Activated B cell treated with CpG ODN at 0.5 μM for 24 hours (primary cell): ENCODE measurements at regions of chr4 and their contacts with region 1.

Region 1: DNA sequence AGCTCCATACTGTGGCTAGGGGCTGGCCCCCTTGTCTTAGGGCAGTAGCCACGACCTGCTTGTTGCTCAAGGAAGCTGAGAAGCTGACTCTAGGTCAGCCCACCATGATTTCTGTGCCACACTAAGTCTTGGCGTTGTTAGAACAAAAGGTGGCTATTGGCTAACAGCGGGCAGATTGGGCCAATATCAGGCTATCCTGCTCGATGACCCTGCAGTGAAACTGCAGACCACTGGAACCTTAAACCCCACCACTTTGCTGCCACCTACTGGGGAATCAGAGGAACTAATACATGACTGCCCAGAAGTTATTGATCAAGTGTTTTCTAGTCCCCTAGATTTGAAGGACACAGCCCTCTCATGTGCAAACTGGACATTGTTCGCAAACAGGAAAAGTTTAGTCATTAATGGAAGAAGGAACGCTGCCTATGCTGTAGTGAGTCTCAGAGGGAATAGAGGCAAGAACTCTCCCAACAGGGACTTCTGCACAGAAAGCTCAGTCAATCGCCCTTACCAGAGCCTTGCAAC is 17.0 kb upstream of the PAPSS1 start:
- DNase-seq: peak; percentile 18
- ATAC-seq: peak; percentile 64
- H3K4me3 Mint-ChIP-seq: no peak overlapping the region
- H3K27ac Mint-ChIP-seq: no peak overlapping the region
- H3K4me1 Mint-ChIP-seq: no peaks in the 10 kb centered on the region
- H3K27me3 Mint-ChIP-seq: no peaks in the 10 kb centered on the region
- CTCF ChIP-seq: peak; percentile 57

Region 2: DNA sequence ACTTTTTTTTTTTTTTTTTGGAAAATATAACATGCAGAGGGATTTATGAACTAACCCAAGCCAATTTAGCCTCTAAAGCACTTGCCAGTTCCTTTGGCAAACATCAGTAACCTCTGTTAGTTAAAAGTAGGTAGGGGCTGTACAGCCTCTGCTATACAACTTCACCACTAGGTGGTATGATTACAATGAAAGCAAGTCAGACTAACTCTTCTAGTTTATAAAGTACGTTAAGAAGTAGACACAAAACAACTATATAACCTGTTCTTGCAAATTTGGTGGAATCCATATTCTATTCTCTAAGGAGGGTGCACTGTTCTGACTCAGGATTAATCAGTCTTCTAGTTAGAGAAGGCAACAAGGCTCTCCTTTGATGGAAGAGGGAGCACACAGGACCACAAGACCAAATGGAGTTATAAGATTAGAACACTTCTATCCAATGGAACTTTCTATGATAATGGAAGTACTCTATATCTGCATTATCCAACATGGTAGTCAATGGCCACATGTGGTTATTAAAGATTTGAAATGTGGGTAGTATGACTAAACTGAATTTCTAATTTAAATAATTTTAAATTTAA is 1407.9 kb before region 1 on chr4:
- CTCF ChIA-PET with region 1: no interaction called
- POLR2A ChIA-PET with region 1: no interaction called
- intact Hi-C with region 1: loop called (anchors 1 kb)
- DNase-seq: no peak
- ATAC-seq: peak; percentile 64
- H3K4me3 Mint-ChIP-seq: no peak overlapping the region
- H3K27ac Mint-ChIP-seq: no peak overlapping the region
- H3K4me1 Mint-ChIP-seq: no peaks in the 10 kb centered on the region
- H3K27me3 Mint-ChIP-seq: no peaks in the 10 kb centered on the region
- CTCF ChIP-seq: peak; percentile 51

Region 3: DNA sequence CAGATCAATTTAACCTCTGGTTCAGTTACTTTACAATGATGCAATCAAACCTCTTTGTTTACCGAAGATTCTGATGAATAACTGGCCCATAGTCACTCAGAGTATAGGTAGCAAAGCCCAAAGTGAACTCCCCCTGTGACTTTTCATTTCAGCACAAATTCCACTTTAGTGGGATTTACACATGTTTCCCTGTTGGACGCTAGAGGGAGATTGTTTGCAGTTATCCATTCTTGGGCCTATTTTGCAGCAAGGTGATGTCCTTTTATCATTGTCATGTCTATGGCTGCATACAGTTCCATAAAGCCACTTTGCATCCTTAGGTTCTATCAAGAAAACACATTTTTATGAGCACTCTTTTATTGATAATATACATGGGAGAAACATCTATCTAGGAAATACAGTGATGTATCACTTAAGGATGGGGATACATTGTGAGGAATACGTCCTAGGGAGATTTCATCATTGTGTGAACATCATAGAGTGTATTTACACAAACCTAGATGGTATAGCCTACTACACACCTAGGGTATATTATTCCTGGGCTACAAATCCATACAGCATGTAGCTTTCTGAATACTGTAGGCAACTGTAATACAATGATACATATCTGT is 686.4 kb before region 1 on chr4:
- CTCF ChIA-PET with region 1: interaction called, 3 read pairs
- POLR2A ChIA-PET with region 1: no interaction called
- intact Hi-C with region 1: loop called (anchors 2 kb)
- DNase-seq: no peak
- ATAC-seq: no peak
- H3K4me3 Mint-ChIP-seq: no peak overlapping the region
- H3K27ac Mint-ChIP-seq: no peak overlapping the region
- H3K4me1 Mint-ChIP-seq: no peaks in the 10 kb centered on the region
- H3K27me3 Mint-ChIP-seq: no peaks in the 10 kb centered on the region
- CTCF ChIP-seq: no peak

Region 4: GRCh38 chr4:107283587-107284559 is 453.1 kb before region 1 on chr4:
- CTCF ChIA-PET with region 1: no interaction called
- POLR2A ChIA-PET with region 1: no interaction called
- intact Hi-C with region 1: loop called (anchors 10 kb)
- DNase-seq: no peak
- ATAC-seq: no peak
- H3K4me3 Mint-ChIP-seq: no peak overlapping the region
- H3K27ac Mint-ChIP-seq: no peak overlapping the region
- H3K4me1 Mint-ChIP-seq: no peaks in the 10 kb centered on the region
- H3K27me3 Mint-ChIP-seq: no peaks in the 10 kb centered on the region
- CTCF ChIP-seq: no peak

Region 5: GRCh38 chr4:107392951-107393350 is 344.0 kb before region 1 on chr4:
- CTCF ChIA-PET with region 1: no interaction called
- POLR2A ChIA-PET with region 1: no interaction called
- intact Hi-C with region 1: no loop called
- DNase-seq: no peak
- ATAC-seq: no peak
- H3K4me3 Mint-ChIP-seq: no peak overlapping the region
- H3K27ac Mint-ChIP-seq: no peak overlapping the region
- H3K4me1 Mint-ChIP-seq: no peaks in the 10 kb centered on the region
- H3K27me3 Mint-ChIP-seq: no peaks in the 10 kb centered on the region
- CTCF ChIP-seq: no peak

Region 6: DNA sequence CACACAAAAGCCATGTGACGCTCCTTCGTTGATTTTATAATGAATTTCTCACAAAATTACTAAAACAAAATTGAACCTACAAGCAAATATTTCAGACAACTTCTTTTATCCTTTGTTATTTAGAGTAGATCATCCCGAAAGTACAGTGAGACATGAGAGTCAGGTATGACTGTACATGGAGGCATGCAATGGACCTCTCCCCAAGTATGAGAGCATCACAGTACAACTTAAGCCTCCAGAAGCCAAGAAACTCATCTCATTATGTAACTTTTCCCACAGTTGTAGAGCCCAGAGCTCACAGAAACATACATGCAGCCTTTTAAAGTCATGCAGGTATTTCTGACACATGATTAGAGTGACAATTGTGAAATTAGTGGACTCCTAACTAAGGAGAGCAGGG is 184.7 kb before region 1 on chr4:
- CTCF ChIA-PET with region 1: no interaction called
- POLR2A ChIA-PET with region 1: no interaction called
- intact Hi-C with region 1: loop called (anchors 10 kb)
- DNase-seq: no peak
- ATAC-seq: no peak
- H3K4me3 Mint-ChIP-seq: no peak overlapping the region
- H3K27ac Mint-ChIP-seq: no peak overlapping the region
- H3K4me1 Mint-ChIP-seq: no peaks in the 10 kb centered on the region
- H3K27me3 Mint-ChIP-seq: peaks cover 1% of the 10 kb centered on the region
- CTCF ChIP-seq: no peak